Mammary epithelial cell (primary cell): ENCODE measurements at regions of chr16 and their contacts with region 1.

Region 1: GRCh38 chr16:31148281-31148771 is 1.5 kb downstream of the PRSS36 start:
- DNase-seq: no peak
- H3K4me3 ChIP-seq: peak overlapping the region in 2 of 3 experiments; percentile 4 to 7
- H3K27ac ChIP-seq: no peak overlapping the region
- H3K4me1 ChIP-seq: peaks cover 6% of the 10 kb centered on the region
- H3K27me3 ChIP-seq: no peaks in the 10 kb centered on the region
- CTCF ChIP-seq: no peak

Region 2: DNA sequence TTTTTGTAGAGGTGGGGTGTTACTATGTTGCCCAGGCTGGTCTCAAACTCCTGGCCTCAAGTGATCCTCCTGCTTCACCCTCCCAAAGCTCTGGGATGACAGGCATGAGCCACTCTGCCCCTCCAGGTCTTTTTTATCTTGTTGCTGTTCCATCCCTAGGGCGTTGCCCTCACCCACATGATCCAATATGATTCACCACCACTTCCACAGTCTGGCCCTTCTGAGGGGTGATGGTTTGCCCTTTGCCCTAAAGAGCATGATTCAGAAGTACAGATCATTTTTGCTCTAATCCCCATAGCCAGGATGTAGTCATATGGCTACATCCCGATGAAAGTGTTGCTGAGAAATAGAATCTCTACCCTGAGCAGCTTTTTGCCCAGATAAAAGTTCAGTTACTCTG is 96.2 kb before region 1 on chr16:
- CTCF ChIA-PET with region 1: no interaction called
- dilution Hi-C with region 1: loop called (anchors 5 kb)
- in situ Hi-C with region 1: no loop called
- intact Hi-C with region 1: loop called (anchors 5 kb)
- DNase-seq: peak; percentile 96
- H3K4me3 ChIP-seq: no peak overlapping the region
- H3K27ac ChIP-seq: peak overlapping the region; percentile 42
- H3K4me1 ChIP-seq: peaks cover 6% of the 10 kb centered on the region
- H3K27me3 ChIP-seq: no peaks in the 10 kb centered on the region
- CTCF ChIP-seq: no peak

Region 3: DNA sequence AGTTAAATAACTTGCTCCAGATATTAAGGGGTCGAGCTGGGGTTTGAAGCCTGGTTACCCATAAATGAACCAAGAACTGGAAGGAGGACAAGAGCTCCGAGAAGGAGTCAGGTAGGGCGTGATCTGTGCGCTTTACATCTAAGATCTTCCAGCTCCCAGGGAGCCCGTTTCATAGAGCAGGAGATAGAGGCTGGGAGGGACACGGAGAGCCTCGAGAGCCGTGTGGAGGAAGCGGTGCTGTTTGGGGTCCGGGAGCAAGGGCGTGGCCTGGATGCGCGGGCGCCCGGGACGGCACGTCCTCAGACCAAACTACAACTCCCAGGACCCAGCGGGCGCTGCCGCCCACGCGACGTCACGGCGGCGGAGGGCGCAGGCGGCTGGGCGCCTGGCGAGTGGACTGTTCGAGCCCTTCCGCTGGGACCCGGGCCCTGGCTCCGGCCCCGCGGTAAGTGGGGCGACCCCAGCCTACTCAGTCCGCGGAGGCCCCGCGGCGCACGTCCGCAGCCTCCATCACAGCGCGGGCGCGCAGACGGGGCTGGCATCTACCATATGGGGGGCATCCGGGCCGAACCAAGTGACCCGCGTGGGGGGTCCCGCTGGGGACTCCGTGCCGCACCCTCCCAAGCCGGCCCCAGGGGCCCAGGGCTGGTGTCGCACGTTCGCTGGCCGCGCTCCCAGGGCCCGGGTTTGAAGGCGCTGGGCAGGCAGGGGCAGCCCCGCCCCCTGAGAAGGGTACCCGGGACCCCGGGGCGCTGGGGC is 40.1 kb before region 1 on chr16 and contains the start of gene BCKDK:
- CTCF ChIA-PET with region 1: no interaction called
- dilution Hi-C with region 1: no loop called
- in situ Hi-C with region 1: loop called in 1 of 2 experiments (anchors 5 kb)
- intact Hi-C with region 1: loop called (anchors 2 kb)
- DNase-seq: peak; percentile 57
- H3K4me3 ChIP-seq: peak within 1 kb of the TSS; percentile 80 to 89 (median 81)
- H3K27ac ChIP-seq: peak within 1 kb of the TSS; percentile 30
- H3K4me1 ChIP-seq: peaks cover 10% of the 10 kb centered on the region
- H3K27me3 ChIP-seq: no peaks in the 10 kb centered on the region
- CTCF ChIP-seq: no peak
- total RNA-seq, gene BCKDK: 26.3 to 47.8 TPM

Region 4: GRCh38 chr16:31238041-31238440 is 89.7 kb after region 1 on chr16:
- CTCF ChIA-PET with region 1: no interaction called
- dilution Hi-C with region 1: loop called (anchors 5 kb)
- in situ Hi-C with region 1: no loop called
- intact Hi-C with region 1: no loop called
- DNase-seq: no peak
- H3K4me3 ChIP-seq: no peak overlapping the region
- H3K27ac ChIP-seq: no peak overlapping the region
- H3K4me1 ChIP-seq: no peaks in the 10 kb centered on the region
- H3K27me3 ChIP-seq: no peaks in the 10 kb centered on the region
- CTCF ChIP-seq: no peak

Region 5: DNA sequence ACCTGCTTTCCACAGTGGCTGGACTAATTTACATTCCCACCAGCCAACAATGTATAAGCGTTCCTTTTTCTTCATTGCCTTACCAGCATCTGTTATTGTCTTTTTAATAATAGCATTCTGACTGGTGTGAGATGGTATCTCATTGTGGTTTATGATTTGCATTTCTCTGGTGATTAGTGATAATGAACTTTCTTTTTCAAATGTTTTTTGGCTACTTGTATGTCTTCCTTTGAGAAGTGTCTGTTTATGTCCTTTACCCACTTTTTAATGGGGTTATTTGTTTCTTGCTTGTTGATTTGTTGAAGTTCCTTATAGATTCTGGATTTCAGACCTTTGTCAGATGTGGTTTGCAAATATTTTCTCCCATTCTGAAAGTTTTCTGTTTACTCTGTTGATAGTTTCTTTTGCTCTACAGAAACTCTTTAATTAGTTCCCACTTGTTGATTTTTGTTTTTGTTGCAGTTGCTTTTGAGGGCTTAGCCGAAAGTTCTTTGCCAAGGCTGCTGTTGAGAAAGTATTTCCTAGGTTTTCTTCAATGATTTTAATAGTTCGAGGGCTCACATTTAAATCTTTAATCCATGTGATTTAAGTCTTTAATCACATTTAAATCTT is 138.2 kb after region 1 on chr16:
- CTCF ChIA-PET with region 1: no interaction called
- dilution Hi-C with region 1: no loop called
- in situ Hi-C with region 1: no loop called
- intact Hi-C with region 1: no loop called
- DNase-seq: no peak
- H3K4me3 ChIP-seq: no peak overlapping the region
- H3K27ac ChIP-seq: no peak overlapping the region
- H3K4me1 ChIP-seq: peaks cover 10% of the 10 kb centered on the region
- H3K27me3 ChIP-seq: no peaks in the 10 kb centered on the region
- CTCF ChIP-seq: no peak